Activated T-helper 1 cell treated with anti-CD3 and anti-CD28 coated beads, Interleukin-12 subunit alpha, Interleukin-12 subunit beta, Interleukin-2, Interleukin-4 antibody, amounts not matched to agents 30 ng/mL and 10 ng/mL and 1 ng/mL, durations not matched to agents 14 hours and 24 hours and 36 hours (primary cell): ENCODE measurements at regions of chr5 and their contacts with region 1.

Region 1: GRCh38 chr5:62412537-62413329 is at the start of gene IPO11:
- DNase-seq: peak; percentile 99
- H3K4me3 Mint-ChIP-seq: peak within 1 kb of the TSS; percentile 94
- H3K27ac Mint-ChIP-seq: peak within 1 kb of the TSS; percentile 90
- H3K4me1 Mint-ChIP-seq: peaks cover 21% of the 10 kb centered on the region
- H3K27me3 Mint-ChIP-seq: peaks cover 7% of the 10 kb centered on the region
- total RNA-seq, gene IPO11: 52.5 and 54.2 TPM in 2 replicates

Region 2: GRCh38 chr5:62326302-62326701 is 86.4 kb before region 1 on chr5:
- intact Hi-C with region 1: no loop called
- DNase-seq: no peak
- H3K4me3 Mint-ChIP-seq: no peak overlapping the region
- H3K27ac Mint-ChIP-seq: peak overlapping the region; percentile 75
- H3K4me1 Mint-ChIP-seq: peaks cover 69% of the 10 kb centered on the region
- H3K27me3 Mint-ChIP-seq: no peaks in the 10 kb centered on the region

Region 3: DNA sequence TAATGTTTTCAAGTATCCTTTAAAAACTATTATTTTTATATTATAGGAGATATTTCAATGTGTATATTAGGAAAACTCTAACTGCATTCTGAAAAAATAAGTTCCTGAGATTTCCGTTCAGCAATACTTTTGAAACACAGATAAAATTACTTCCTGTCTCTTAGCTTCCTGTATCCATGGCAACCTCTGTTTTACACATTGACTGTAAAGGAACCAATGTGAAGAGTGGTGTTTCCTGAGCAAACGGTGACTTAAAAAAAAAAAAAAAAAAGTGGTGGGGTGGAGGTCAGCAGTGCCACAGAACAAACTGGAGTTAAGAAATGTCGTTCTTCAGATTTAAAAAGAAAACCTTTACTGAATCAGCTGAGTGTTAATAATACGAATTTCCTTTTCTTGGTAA is 165.8 kb after region 1 on chr5 and contains the start of gene LRRC70:
- intact Hi-C with region 1: loop called (anchors 5 kb)
- DNase-seq: peak; percentile 21
- H3K4me3 Mint-ChIP-seq: peak within 1 kb of the TSS; percentile 29
- H3K27ac Mint-ChIP-seq: peak within 1 kb of the TSS; percentile 59
- H3K4me1 Mint-ChIP-seq: peaks cover 31% of the 10 kb centered on the region
- H3K27me3 Mint-ChIP-seq: no peaks in the 10 kb centered on the region
- total RNA-seq, gene LRRC70: 0.83 and 0.86 TPM in 2 replicates